ENCODE measurements at regions of chr10 and their contacts with region 1.

Region 1: DNA sequence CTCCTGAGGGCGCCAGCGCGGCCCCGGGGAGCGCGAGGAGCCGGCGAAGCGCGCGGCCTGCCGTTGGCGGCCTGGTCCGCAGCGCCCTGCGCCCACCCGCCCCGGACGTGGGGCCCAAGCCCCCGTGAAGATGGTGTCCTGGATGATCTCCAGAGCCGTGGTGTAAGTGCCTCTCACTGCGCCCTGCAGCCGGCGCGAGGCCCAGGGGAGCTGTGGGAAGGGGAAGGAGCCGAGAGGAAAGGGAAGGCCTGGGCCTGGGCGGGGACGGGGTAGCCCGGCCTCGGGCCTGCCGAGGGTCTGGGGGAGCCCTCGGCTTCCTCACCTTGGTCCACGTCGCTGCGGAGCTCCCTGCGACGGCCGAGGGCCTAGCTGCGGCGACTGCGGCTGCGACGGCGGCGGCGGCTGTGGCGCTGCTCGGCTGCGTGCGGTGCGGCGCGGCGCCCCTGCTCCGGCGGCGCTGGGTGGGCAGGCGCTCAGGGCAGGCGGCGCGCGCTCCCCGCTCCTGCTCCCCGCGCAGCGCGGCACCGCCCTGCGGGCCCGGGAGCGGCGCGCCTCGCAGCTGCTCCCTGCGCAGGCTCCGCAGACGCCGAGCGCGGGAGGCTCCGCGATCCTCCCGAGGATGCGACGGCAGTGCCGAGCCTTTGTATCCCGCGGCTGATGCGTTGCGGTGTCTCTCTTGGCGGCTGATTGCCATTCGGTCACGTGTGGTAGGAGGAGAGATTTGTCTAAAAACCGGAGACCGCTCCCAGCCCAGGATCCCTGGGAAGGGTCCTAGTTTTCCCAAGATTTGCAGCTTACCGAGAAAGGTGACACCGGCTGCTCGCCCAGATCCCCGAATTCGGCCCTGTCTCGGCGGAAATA is 445 bp downstream of the REEP3 start:
- DNase-seq: peak; percentile 81
- ATAC-seq: peak; percentile 90

Region 2: DNA sequence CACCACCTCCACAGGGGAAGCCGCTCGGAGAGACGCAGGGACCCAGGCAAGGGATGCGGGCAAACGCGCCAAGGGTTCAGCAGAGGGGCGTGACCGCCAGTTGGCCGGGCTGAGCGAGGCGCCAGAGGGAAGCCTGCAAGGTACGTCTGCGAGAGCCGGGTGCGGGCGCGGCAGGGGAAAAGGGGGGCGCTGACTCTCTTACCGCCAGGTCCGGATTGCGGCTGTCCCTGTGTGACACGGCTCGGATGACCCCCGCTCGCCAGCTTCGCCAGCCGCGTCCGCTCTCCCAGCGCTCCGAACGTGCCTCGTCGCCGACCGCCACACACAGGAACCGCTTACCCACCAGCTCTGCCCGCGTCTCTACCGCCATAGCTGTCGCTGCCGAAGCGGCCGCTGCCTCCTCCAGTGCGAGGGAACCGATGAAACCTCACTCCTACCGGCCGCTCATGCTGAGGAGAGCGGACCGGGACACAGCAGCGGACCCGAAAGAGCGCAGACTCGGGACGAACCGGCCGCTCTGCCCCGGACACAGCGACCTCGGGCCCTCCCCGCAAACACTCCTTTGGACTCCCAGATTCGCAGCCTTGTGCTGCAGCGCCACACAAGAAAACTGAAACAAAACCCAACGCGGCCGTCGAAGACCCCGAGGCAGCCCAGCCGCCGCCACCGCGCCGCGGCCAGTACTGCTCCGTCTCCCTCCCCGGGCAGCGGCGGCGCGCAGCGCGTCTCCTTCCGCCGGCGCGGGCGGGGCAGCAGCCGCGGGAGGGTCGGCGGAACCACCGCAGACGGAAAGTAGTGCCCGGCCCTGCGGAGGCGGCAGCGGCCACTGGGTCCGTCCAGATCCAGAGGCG is 56.1 kb before region 1 on chr10 and contains the start of gene JMJD1C:
- intact Hi-C with region 1: loop called (anchors 5 kb)
- DNase-seq: peak; percentile 84
- ATAC-seq: peak; percentile 94
- total RNA-seq, gene JMJD1C: 32.9 TPM

Region 3: DNA sequence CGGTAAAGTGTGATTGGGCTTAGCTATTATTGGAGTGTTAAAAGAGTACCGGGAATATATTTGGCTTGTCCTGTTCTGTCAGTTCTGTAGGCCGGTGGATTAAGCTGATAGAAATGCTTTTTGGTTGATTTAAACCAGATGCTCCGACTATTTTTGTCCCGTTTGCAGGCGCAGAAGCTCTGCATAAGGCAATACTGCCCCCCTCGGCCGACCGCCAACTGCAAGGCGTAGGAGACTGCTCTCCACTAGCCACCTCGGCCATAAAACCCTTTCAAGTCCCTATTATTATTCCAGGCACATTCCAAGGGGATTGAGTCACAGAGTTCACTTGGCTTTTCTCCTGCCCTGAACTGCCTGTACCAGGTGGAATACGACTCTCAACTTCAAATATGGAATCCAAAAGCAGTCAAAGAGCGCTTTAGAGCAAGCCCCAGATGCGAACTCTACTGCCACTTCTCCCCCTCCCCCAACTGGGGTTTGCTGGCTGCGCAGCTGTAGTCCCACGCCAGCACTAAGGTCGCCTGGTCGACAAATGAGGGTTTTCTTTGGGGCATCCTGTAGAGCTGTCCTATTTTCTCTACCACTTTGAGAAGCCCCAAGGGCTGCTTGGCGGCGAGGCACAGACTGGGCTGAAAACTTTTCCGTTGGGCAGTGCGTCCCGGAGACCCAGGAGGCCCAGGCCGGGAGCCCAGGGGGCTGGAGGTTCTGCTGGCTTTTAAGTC is 107.9 kb after region 1 on chr10:
- intact Hi-C with region 1: loop called (anchors 5 kb)
- DNase-seq: peak; percentile 97
- ATAC-seq: peak; percentile 82

Region 4: GRCh38 chr10:63711867-63712716 is 190.4 kb after region 1 on chr10:
- intact Hi-C with region 1: loop called (anchors 10 kb)
- DNase-seq: peak; percentile 95
- ATAC-seq: peak; percentile 94

Measured in Right ventricle myocardium superior (tissue), 1 donor.